HEK293T (cell line): ENCODE measurements at regions of chr14 and their contacts with region 1.

Region 1: DNA sequence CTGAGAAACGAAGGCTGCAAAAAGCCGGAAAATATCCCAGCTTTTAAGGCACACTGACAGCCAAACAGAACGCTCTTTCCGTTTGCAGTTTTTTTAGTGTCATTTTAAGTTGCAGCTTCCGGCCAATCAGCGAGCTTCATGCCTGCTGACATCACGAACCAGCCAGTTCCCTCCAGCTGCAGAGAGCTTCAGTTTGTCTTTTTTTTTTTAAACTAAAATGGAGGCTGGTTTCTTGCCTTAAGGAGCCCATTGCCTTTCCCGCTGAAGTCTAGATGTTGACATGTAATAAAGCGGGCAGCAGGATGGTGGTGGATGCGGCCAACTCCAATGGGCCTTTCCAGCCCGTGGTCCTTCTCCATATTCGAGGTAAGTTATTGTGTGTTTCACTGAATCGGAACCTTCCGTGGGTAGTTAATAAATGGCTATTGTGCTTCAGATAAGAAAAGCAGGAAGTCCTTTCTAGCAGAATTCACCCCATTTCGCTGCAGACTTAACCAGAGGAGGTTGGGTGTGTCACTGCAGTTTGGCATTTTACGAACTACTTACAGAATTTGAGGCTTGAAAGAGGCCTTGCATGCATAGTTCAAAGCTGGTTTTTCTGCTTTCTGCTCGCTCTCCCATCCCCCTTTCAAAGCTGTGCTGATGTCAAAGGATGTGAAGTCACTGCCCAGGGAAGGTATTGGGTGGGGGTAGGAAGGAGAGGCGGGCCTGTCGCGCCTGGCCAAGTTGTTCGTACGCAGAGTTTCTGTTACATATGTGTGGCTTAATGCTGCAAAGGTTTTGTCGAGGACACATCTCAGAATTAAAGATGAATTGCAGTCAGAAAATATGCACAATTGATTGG is 48.4 kb downstream of the PPP2R5C start:
- DNase-seq: peak; percentile 82

Region 2: GRCh38 chr14:101770183-101770582 is 39.7 kb before region 1 on chr14:
- CTCF ChIA-PET with region 1: interaction called, 7 read pairs
- POLR2A ChIA-PET with region 1: interaction called, 16 read pairs
- DNase-seq: no peak

Region 3: GRCh38 chr14:101830271-101830670 is 20.4 kb after region 1 on chr14:
- CTCF ChIA-PET with region 1: no interaction called
- POLR2A ChIA-PET with region 1: interaction called, 10 read pairs
- DNase-seq: no peak

Region 4: DNA sequence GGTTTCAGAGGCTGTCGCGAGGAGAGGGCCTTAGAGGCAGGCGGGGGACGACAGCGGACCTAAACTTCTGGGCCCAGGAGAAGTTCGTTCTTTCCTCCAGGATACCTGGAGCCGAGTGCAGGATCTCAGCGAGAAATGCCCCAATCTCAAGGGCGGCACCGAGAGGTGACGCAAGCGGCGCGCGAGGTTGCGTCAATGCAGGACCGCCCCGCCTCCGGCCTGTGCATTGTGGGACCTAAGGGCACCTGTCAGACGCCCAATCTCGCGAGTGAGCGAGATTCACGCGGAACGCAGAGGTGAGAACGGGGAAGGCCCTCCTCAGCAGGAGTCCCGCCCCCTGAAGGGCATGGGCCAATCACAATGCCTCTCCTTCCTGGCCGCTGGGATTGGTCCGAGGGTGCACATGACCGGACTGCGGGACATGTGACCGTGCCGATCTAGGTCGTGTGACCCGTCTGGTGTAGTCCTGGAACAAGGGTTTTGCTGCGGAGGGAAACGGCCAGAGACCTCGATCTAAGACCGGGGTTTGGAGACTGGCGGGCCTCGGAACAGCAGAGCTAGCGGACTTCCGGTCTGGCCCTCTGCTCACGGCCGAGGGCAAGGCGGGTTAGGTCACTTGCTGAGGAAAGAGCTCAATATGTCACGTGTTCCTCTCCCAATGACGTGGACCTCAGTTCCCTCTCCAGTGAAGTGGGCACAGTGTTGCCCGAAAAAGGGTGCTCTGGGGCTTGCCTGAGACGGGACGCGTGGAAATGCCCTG is 138.2 kb after region 1 on chr14:
- CTCF ChIA-PET with region 1: no interaction called
- POLR2A ChIA-PET with region 1: interaction called, 10 read pairs
- DNase-seq: peak; percentile 99